ENCODE measurements at regions of chr12 and their contacts with region 1.

Region 1: DNA sequence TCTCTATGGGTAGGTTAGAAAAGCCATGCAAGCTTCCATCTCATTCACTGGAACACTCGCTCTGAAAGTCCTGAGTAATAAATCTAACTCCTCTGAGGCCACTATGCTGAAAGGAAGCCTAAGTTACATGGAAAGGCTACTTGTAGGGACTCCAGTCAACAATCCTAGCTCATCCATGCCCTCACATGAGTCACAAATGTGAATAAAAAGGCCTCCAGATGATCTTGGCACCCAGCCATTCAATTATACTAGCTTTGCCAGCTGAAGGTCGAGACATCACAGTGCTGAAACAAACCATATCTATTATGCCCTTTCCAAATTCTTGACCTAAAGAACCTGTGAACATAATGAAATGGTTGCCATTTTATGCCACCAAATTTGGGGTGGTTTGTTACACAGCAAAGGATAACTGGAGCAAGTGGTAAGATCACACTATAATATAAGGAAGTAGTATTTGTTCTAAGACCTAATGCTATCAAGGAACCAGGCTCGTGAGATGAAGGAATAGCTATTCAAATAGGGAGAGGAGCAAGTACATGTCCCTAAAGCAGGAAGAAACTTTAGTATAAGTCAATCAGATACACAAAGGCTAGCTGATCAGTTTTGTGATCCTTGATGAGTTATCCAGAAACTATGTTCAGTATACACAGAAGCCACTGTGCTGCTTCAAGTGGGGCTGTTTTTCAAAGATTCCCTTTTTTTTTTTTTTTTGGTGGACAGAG is 142.1 kb downstream of the MED13L start:
- DNase-seq: no peak
- H3K4me3 ChIP-seq: no peak overlapping the region
- H3K27me3 ChIP-seq: no peaks in the 10 kb centered on the region
- CTCF ChIP-seq: no peak

Region 2: DNA sequence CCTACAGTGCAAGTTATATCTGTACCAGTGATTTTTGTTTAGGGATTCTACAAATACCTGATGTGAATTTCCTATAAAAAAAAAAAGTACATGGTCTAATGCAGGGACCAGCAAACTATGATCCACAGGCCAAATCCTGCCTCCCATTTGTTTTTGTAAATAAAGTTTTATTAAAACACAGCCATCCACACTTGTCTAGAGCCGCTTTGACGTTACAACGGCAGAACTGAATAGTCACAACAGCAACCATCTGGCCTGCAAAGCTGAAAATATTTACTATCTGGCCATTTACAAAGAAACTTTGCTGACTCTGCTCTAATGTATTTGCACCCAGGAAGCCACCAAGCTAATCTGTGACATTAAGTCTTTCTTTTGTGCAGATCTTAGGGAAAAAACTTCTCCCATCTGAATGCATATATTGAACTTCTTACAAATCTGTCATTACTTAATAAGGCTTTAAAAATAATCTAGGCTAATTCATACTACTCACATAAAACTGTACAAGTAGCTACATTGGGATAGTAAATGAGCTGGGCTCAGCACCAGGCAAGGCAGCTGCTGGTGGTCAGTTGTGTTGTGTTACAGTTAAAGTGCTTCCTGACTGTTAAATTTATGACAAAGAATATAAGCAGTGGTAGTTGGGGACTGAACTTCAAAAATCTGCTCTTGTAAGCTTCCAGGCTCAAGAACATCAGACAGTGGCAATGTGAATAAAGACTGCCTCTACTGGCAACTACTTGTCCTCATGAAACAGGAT is 161.2 kb before region 1 on chr12:
- CTCF ChIA-PET with region 1: no interaction called
- POLR2A ChIA-PET with region 1: no interaction called
- DNase-seq: no peak
- H3K4me3 ChIP-seq: no peak overlapping the region
- H3K27me3 ChIP-seq: no peaks in the 10 kb centered on the region
- CTCF ChIP-seq: no peak

Region 3: DNA sequence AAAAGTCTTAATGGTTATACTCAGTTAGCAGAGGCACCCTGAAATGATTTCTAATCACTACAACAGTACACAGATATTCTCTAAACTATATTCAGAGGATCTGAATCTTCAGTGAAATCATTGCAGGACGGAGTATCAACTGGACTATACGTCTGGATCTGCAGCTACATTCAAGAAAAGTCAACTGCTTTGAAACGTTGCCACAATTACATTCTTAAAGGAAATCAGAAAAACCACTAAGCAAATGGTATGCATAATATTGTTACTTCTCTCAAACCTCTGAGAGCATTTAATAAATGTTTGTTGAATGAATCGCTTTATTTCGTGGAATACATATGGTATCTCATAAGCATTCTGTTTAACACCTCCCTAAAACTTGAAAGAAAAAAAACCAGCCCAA is 74.8 kb after region 1 on chr12:
- CTCF ChIA-PET with region 1: no interaction called
- POLR2A ChIA-PET with region 1: interaction called, 17 read pairs
- DNase-seq: no peak
- H3K4me3 ChIP-seq: no peak overlapping the region
- H3K27me3 ChIP-seq: no peaks in the 10 kb centered on the region
- CTCF ChIP-seq: no peak